ENCODE measurements at regions of chr10 and their contacts with region 1.

Region 1: GRCh38 chr10:71128311-71128980 is 83.9 kb upstream of the UNC5B start:
- DNase-seq: no peak
- ATAC-seq: peak; percentile 57

Region 2: DNA sequence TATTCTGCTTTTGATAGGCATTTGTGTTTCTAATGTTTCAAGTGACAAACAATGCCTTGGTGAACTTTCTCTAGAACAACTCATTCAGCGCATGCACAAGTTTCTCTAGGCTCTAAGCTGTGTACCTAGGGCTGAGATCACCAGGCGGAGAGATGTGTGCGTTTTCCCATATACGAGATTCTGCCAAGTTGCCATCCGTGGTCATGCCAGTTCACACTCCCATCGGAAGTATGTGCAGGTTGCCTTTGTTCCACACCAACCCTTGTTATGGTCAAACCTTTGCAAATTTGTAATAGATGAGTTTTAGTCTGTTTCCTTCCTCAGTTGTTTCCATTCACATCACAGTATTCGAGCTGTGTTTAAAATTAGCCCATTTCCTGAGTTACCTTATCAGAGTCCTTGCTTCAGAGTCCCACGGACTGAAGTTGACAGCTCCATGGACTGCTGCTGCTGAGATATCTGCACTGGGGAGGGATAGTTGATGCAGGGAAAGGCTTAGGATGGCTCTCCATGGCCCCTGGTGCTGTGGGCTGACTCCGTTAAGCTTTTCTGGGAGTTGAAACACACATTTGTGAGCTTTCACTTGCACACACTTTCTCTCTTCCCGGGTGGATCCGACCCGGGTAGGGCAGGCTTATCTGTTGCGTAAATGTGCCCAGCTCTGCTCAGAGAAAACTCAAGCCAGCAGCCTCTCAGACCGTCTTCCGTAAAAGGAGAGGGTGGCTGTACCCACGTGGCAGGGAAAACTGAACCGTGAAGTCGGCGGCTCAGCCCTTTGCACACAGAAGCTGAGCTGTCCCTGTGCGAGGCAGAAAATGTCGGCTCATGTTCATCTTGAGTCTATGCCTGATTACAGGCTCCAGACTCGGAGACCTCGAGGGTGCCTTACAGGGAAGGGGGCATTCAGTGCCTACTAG is 1800.7 kb before region 1 on chr10:
- intact Hi-C with region 1: no loop called
- DNase-seq: peak; percentile 70
- ATAC-seq: peak; percentile 88

Region 3: DNA sequence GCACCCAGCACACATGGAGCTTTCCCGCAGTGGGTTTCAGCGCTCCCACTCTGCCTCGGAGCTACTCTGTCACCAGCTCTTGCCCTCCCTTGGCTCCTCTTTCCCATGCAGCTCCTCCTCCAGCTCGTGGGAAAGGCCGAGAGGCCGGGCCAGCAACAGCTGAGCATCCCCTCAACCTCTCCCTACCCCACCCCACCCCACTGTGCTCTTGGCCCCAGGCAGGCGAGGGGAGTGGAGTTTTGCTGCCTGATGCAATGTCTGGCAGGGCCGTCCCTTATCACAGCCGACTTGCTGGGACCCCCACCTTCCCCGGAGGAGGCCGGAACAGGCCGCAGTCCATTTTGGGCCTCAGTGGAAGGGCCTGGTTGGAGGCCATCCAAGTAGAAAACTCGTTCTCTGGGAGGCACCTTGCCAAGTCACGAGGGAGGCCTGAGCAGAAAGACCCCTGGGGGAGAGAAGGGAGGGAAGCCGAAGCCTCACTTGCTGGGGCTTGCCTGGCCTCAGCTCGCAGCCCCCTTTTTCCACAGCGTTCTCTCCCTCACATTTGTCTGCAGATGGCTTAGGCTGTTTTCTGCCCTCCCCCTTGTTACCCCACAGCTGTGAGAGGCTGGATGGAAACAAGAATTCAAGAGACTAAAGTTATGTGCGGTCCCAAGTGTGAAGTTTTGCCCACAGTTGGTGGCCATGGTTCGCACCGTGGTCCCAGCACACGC is 871.1 kb after region 1 on chr10:
- intact Hi-C with region 1: loop called (anchors 5 kb)
- DNase-seq: peak; percentile 80
- ATAC-seq: peak; percentile 90